ENCODE measurements at regions of chr13 and their contacts with region 1.

Region 1: DNA sequence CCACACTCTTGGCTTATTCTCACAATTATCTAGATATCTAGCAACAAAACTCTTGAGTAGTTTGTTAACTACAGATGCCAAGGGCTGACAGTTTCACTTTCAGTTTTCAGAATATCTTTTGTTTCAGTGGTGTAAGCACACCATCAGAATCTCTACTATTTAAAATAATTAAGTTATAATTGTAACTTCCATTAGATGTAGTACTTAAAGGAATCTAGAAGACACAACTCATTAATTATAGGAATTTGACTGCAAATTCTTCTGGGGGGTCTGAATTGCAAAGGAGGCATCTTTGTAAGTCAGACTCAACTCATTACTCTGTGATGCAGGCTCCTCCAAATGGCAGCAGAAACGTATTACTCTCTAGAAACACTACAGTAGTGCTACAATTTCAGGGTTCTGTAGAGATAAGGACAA is 44.9 kb upstream of the USPL1 start:
- DNase-seq: no peak
- ATAC-seq: peak; percentile 83
- H3K4me3 Mint-ChIP-seq: peak overlapping the region; percentile 64
- H3K27ac Mint-ChIP-seq: peak overlapping the region; percentile 71
- H3K4me1 Mint-ChIP-seq: peaks cover 23% of the 10 kb centered on the region
- H3K27me3 Mint-ChIP-seq: no peaks in the 10 kb centered on the region
- CTCF ChIP-seq: no peak

Region 2: GRCh38 chr13:30142486-30143211 is 430.2 kb before region 1 on chr13:
- CTCF ChIA-PET with region 1: no interaction called
- POLR2A ChIA-PET with region 1: no interaction called
- intact Hi-C with region 1: loop called (anchors 5 kb)
- DNase-seq: no peak
- ATAC-seq: no peak
- H3K4me3 Mint-ChIP-seq: no peak overlapping the region
- H3K27ac Mint-ChIP-seq: no peak overlapping the region
- H3K4me1 Mint-ChIP-seq: peaks cover 37% of the 10 kb centered on the region
- H3K27me3 Mint-ChIP-seq: peaks cover 2% of the 10 kb centered on the region
- CTCF ChIP-seq: no peak

Region 3: DNA sequence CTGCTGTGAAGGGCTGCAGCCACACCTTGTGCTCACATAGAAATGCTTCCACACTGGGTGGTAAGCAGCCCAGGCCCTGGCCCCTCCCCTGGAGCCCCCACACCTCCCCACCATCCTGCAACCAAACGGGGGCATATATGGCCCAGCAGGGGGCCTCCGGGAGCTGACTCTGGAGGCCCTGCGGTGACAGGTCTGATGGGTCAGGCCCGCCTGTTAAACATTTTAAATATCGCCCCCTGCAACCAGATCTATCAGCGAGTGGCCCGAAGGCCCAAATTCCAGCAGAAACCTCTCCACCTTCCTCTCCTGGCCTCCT is 217.5 kb before region 1 on chr13:
- CTCF ChIA-PET with region 1: no interaction called
- POLR2A ChIA-PET with region 1: no interaction called
- intact Hi-C with region 1: loop called (anchors 1 kb)
- DNase-seq: peak; percentile 61
- ATAC-seq: peak; percentile 100
- H3K4me3 Mint-ChIP-seq: peak overlapping the region; percentile 45
- H3K27ac Mint-ChIP-seq: peak overlapping the region; percentile 77
- H3K4me1 Mint-ChIP-seq: peaks cover 32% of the 10 kb centered on the region
- H3K27me3 Mint-ChIP-seq: no peaks in the 10 kb centered on the region
- CTCF ChIP-seq: no peak